Gastrocnemius medialis (tissue), 4 donors: ENCODE measurements at regions of chr6 and their contacts with region 1.

Region 1: GRCh38 chr6:88982720-88983119 is 19.3 kb upstream of the RNGTT start:
- DNase-seq: peak; percentile 69 to 83
- ATAC-seq: peak; percentile 100
- H3K4me3 ChIP-seq: no peak overlapping the region
- H3K27ac ChIP-seq: peak overlapping the region; percentile 49 to 63 (median 53)
- H3K4me1 ChIP-seq: peaks cover 7 to 10% of the 10 kb centered on the region in 2 donors
- H3K27me3 ChIP-seq: no peaks in the 10 kb centered on the region
- CTCF ChIP-seq: peak; percentile 68 to 84 (median 72)
- POLR2A ChIP-seq: no peak

Region 2: GRCh38 chr6:89023591-89024441 is 41.1 kb after region 1 on chr6:
- in situ Hi-C with region 1: no loop called
- intact Hi-C with region 1: loop called (anchors 2 kb)
- DNase-seq: peak in 1 of 2 donors; percentile 29
- ATAC-seq: peak; percentile 49 to 78
- H3K4me3 ChIP-seq: no peak overlapping the region
- H3K27ac ChIP-seq: peak overlapping the region; percentile 49 to 78 (median 62)
- H3K4me1 ChIP-seq: peaks cover 31 to 32% of the 10 kb centered on the region in 2 donors
- H3K27me3 ChIP-seq: no peaks in the 10 kb centered on the region
- CTCF ChIP-seq: no peak
- POLR2A ChIP-seq: no peak

Region 3: DNA sequence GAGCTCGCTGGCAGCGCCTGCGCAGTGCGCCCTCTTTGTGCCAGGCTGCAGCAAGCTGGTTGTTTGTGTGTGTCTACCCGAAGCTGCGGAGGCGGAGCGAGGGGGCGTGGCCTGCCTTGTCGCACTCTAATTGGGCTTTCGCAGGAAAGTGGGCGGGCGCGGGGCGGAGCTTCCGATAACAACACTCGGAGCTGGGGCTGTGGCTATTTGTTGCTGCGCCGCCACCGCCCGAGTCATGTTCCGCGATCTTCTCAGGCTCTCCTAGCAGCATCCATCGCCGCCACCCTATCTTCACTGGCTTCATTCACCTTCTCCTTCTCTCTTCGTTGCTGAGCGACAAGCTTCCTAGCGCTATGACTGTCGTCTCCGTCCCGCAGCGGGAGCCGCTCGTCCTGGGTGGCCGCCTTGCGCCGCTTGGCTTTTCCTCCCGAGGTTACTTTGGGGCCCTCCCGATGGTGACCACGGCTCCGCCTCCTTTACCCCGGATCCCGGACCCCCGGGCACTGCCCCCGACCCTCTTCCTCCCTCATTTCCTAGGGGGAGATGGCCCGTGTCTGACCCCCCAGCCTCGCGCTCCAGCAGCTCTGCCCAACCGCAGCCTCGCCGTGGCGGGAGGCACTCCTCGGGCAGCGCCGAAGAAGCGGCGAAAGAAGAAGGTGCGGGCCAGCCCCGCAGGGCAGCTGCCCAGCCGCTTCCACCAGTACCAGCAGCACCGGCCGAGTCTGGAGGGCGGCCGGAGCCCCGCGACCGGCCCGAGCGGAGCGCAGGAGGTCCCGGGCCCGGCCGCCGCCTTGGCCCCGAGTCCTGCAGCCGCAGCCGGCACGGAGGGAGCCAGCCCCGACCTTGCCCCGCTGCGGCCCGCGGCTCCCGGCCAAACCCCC is 98.1 kb after region 1 on chr6 and contains the start of gene PNRC1:
- in situ Hi-C with region 1: no loop called
- intact Hi-C with region 1: loop called (anchors 2 kb)
- DNase-seq: peak; percentile 100
- ATAC-seq: peak; percentile 70 to 75
- H3K4me3 ChIP-seq: peak within 1 kb of the TSS; percentile 94 to 99 (median 95)
- H3K27ac ChIP-seq: peak within 1 kb of the TSS; percentile 98 to 100 (median 99)
- H3K4me1 ChIP-seq: peaks cover 20 to 30% of the 10 kb centered on the region in 2 donors
- H3K27me3 ChIP-seq: no peaks in the 10 kb centered on the region
- CTCF ChIP-seq: peak in 2 of 5 experiments; percentile 5 to 13
- POLR2A ChIP-seq: peak; percentile 100
- total RNA-seq, gene PNRC1: 229 to 458 (median 311) TPM

Region 4: DNA sequence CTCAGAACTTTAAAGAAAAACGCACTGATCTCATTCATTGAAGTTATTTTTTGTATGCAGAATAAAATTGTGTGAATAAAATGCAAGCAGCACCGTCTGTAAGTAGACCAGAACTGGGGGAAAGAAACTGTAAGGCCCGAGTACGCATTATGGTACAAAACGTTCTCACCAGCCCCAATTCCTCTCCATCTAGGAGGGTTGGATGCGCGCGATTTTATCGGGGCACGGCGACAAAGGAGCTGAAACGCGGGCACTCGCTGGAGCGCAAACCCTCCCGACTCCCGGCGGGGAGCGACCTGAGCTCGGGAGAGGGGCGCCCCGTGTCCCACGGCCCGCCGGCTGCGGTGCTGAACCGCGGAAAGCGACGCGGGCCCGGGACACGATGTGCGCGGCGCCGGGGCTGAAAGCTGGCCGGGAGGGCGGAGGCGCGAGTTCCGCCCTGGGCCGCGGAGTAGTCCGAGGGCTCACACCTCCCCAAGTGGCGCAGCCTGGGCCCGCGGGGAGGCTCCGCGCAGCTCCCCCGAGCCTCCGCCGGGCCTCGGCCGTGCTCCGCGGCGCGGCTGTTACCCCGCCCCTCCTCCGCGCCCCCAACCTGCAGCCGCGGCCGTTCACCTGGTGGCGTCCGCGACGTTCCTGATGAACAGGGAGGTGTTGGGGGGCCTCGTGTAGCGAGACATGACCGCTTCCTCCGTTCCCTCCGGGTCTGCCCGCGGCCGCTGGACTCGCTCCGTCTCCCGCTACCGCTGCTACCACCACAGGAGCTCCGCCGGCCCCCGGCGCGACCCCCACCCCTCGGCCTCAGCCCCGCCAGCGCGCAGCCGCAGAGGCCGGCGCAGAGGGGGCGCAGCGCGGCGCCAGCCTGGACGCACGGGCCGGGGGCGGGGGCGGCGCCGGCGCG is 134.7 kb after region 1 on chr6 and contains the start of gene SRSF12:
- in situ Hi-C with region 1: loop called in 1 of 4 experiments (anchors 10 kb)
- intact Hi-C with region 1: loop called (anchors 1 kb)
- DNase-seq: no peak
- ATAC-seq: peak; percentile 59 to 75
- H3K4me3 ChIP-seq: peak within 1 kb of the TSS; percentile 58 to 86 (median 70)
- H3K27ac ChIP-seq: peak within 1 kb of the TSS in 3 of 4 donors; percentile 20 to 37 (median 26)
- H3K4me1 ChIP-seq: peaks cover 9 to 18% of the 10 kb centered on the region in 2 donors
- H3K27me3 ChIP-seq: no peaks in the 10 kb centered on the region
- CTCF ChIP-seq: no peak
- POLR2A ChIP-seq: no peak
- total RNA-seq, gene SRSF12: 0.31 to 0.33 TPM in 2 of 4 donors, not detected in the others

Region 5: GRCh38 chr6:89145787-89146646 is 163.3 kb after region 1 on chr6 and contains the start of gene PM20D2:
- in situ Hi-C with region 1: no loop called
- intact Hi-C with region 1: no loop called
- DNase-seq: peak; percentile 54 to 75
- ATAC-seq: peak; percentile 67 to 71
- H3K4me3 ChIP-seq: peak within 1 kb of the TSS; percentile 74 to 90 (median 82)
- H3K27ac ChIP-seq: peak within 1 kb of the TSS; percentile 94 to 99 (median 98)
- H3K4me1 ChIP-seq: peaks cover 23 to 25% of the 10 kb centered on the region in 2 donors
- H3K27me3 ChIP-seq: no peaks in the 10 kb centered on the region
- CTCF ChIP-seq: no peak
- POLR2A ChIP-seq: peak; percentile 85 to 88
- total RNA-seq, gene PM20D2: 18.1 to 54.6 (median 26.3) TPM

Region 6: GRCh38 chr6:89242574-89243330 is 260.0 kb after region 1 on chr6:
- in situ Hi-C with region 1: loop called (anchors 5 kb)
- intact Hi-C with region 1: loop called (anchors 1 kb)
- DNase-seq: no peak
- ATAC-seq: peak; percentile 70 to 74
- H3K4me3 ChIP-seq: no peak overlapping the region
- H3K27ac ChIP-seq: no peak overlapping the region
- H3K4me1 ChIP-seq: peaks cover 0 to 3% of the 10 kb centered on the region in 2 donors
- H3K27me3 ChIP-seq: no peaks in the 10 kb centered on the region
- CTCF ChIP-seq: peak; percentile 65 to 84 (median 67)
- POLR2A ChIP-seq: no peak

Region 7: DNA sequence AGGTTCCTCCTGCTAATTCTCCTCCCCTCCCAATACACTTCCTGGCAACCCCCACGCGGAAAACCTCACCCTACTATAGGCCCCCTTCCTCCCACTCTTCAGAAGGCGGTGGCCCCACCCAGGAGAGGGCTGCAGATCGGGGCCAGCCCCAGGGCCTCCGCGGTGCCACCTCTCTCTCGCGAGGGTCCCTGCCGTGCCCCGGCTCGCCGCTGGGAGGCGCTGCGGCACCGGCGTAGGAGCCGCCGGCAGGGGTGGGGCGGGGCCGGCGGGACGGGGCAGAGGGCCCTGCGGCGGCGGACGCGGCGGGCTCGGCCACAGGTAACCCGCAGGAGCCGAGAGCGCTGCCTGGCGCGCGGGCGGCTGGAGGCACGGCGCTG is 450.1 kb after region 1 on chr6 and contains the start of gene ANKRD6:
- in situ Hi-C with region 1: no loop called
- intact Hi-C with region 1: loop called (anchors 2 kb)
- DNase-seq: peak; percentile 30 to 64
- ATAC-seq: peak; percentile 84 to 90
- H3K4me3 ChIP-seq: peak within 1 kb of the TSS; percentile 61 to 90 (median 74)
- H3K27ac ChIP-seq: peak within 1 kb of the TSS in 2 of 4 donors; percentile 34 to 56
- H3K4me1 ChIP-seq: no peaks in the 10 kb centered on the region
- H3K27me3 ChIP-seq: no peaks in the 10 kb centered on the region
- CTCF ChIP-seq: peak; percentile 79 to 97 (median 97)
- POLR2A ChIP-seq: no peak
- total RNA-seq, gene ANKRD6: 1.6 to 6.8 (median 2.9) TPM

Region 8: DNA sequence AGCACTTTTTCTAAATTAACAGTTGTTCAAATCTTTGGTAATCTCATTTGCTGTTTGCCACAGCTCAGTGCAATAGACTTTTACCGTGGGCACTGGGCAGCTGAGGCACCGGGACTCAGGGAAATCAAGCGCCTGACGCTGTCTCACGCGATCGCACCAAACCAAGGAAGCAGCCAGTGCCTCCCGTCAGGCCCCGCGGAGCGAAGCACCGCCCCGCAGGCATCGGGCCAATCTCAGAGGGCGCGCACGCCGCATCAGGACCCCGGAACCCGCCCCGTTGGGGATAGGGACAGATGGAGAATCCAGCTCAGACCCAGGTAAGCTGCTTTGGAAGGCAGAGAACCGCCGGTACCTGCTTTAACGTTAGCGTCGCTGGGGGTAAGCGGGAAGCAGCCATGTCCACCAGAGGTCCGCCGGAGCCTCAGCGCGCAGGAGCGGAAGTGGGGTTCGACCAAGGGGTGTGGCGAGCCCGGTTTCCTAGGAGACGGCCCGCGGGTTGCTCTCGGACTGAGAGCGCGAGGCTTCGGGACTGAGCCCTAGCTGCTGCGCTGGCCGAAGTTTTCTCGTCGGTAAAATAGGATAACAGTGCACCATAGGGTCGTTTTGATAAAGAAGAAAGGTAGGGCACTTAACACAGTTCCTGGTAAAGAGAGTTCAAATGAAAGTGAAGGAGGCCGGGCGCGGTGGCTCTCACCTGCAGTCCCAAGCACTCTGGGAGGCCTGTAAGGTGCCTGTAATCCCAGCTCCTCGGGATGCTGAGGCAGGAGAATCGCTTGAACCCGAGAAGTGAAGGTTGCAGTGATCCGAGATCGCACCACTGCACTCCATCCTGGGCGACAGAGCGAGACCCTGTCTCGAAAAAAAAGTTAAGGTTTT is 655.8 kb after region 1 on chr6 and contains the start of gene LYRM2:
- in situ Hi-C with region 1: loop called in 1 of 4 experiments (anchors 25 kb)
- intact Hi-C with region 1: loop called (anchors 10 kb)
- DNase-seq: peak; percentile 93 to 94
- ATAC-seq: peak; percentile 97 to 98
- H3K4me3 ChIP-seq: peak within 1 kb of the TSS; percentile 76 to 88 (median 85)
- H3K27ac ChIP-seq: peak within 1 kb of the TSS; percentile 90 to 98 (median 95)
- H3K4me1 ChIP-seq: peaks cover 14% of the 10 kb centered on the region in 2 donors
- H3K27me3 ChIP-seq: no peaks in the 10 kb centered on the region
- CTCF ChIP-seq: peak in 4 of 5 experiments; percentile 5 to 27 (median 19)
- POLR2A ChIP-seq: peak; percentile 90 to 91
- total RNA-seq, gene LYRM2: 15.8 to 40.2 (median 23.3) TPM